Sigmoid colon (tissue), 7 donors: ENCODE measurements at regions of chr19 and their contacts with region 1.

Region 1: DNA sequence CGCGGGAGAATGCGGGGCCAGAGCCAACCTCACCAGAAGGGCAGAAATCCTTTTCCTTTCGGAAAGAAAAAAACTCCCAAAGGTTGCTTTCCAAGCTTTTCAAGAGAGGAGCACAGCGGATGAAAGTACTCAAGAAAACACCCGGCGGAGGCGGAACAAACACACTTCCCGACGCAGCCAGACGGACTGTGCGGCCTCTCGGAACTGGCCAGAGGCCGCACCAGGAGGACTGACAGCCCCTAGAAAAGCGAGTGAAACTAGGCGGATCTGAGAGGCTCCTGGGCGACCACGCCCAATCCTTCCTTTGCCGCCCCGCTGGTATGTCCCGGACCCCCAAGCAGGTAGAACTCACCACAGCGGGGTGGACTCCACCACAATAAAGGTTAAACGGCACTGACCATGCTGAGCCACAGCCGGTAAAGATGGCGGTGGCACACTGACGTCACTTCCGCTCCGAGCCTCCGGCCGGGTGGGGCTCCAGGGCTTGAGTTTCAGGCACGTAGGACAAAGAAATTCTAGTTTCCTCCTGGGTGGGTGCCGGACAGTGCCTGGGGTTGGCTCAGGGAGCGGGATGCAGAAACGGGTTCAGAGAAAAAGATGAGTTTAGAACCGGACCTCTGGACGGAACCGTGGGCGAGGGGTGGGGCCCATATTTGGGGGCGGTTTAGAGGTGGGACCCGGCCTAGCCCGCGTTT is at the start of gene ZNF562:
- DNase-seq: peak; percentile 92
- H3K4me3 ChIP-seq: peak within 1 kb of the TSS; percentile 63 to 68 (median 66)
- H3K27ac ChIP-seq: peak within 1 kb of the TSS; percentile 91 to 95 (median 93)
- H3K4me1 ChIP-seq: peaks cover 0 to 16% (median 6%) of the 10 kb centered on the region in 4 donors
- H3K27me3 ChIP-seq: no peaks in the 10 kb centered on the region
- CTCF ChIP-seq: no peak
- EP300 ChIP-seq: no peak
- POLR2A ChIP-seq: peak; percentile 36 to 56
- total RNA-seq, gene ZNF562: 21.3 to 45.4 (median 32.4) TPM

Region 2: DNA sequence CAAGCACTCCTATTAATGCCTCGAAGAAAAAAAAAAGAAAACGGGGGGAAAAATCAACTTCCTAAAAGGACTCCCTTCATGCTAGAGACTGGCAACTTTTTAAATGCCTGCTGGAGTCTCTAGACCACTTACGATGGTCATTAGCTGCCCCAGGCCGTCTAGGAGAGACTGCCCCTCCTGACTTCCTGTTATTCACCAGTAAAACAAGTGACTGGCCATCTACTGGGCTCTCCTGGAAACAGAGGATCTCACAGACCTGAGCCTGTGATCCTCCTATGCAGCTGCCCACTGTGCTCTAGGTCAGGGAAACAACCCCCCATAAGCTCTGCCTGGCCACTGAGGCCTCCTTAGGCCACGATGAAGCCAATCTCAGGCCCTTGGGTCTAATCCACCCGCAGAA is 246.9 kb before region 1 on chr19:
- intact Hi-C with region 1: no loop called
- DNase-seq: no peak
- H3K4me3 ChIP-seq: no peak overlapping the region
- H3K27ac ChIP-seq: no peak overlapping the region
- H3K4me1 ChIP-seq: no peaks in the 10 kb centered on the region
- H3K27me3 ChIP-seq: no peaks in the 10 kb centered on the region
- CTCF ChIP-seq: no peak
- EP300 ChIP-seq: no peak
- POLR2A ChIP-seq: no peak

Region 3: DNA sequence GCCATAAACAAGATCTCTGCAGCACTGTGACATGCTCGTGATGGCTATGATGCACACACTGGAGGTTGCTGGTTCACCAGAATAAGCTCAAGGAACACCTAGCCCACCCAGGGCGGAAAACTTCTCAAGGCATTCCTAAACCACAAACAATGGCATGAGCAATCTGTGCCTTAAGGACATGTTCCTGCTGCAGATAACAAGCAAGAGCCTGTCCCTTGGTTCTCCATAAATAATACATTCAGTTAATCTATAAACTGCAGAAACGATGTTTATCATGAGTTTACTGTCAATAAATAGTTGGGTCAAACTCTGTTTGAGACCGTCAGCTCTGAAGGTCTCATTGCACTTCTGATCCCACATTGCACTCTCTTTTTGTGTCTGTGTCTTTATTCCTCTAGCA is 220.9 kb before region 1 on chr19:
- intact Hi-C with region 1: no loop called
- DNase-seq: no peak
- H3K4me3 ChIP-seq: no peak overlapping the region
- H3K27ac ChIP-seq: no peak overlapping the region
- H3K4me1 ChIP-seq: no peaks in the 10 kb centered on the region
- H3K27me3 ChIP-seq: no peaks in the 10 kb centered on the region
- CTCF ChIP-seq: no peak
- EP300 ChIP-seq: no peak
- POLR2A ChIP-seq: no peak

Region 4: DNA sequence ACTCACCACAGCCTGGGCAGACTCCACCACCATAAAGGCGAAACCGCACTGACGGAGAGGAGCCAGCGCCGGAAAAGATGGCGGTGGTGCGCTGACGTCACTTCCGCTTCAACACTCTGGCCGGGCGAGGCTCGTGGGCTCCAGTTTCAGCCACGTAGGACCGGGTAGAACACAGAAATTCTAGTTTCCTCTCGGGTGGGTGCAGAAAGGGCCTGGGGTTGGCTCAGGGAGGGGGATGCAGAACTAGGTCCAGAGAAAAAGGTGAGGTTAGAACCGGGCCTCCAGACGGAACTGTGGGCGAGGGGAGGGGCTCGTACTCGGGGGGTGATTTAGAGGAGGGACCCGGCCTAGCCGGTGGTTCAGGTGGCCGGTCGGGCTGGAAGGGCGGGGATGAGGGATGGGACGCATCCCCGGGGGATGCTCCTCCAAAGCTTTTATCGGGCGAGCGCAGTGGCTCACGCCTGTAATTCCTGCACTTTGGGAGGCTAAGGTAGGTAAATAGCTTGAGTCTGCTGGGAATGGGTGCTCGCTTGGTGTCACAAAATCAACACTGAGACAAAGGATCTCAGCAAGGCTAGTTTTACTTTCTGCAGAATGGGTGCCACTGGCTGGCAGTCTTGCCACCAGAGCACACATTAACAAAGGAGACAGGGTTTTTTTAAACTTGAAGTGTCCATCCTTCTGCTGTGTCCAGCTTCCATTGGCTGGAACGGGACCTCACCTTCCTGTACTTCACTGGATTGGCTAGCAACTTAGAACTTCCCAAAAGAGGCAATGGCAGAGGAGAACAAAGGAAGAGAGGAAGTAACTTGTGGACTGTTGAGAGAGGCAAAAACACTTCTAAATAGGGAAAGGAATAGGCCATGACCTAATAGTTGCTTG is 53.4 kb before region 1 on chr19 and contains the start of gene ZNF561:
- intact Hi-C with region 1: loop called (anchors 2 kb)
- DNase-seq: peak; percentile 90
- H3K4me3 ChIP-seq: peak within 1 kb of the TSS; percentile 73 to 88 (median 76)
- H3K27ac ChIP-seq: peak within 1 kb of the TSS; percentile 87 to 91 (median 90)
- H3K4me1 ChIP-seq: peaks cover 0 to 49% (median 35%) of the 10 kb centered on the region in 4 donors
- H3K27me3 ChIP-seq: no peaks in the 10 kb centered on the region
- CTCF ChIP-seq: no peak
- EP300 ChIP-seq: no peak
- POLR2A ChIP-seq: no peak
- total RNA-seq, gene ZNF561: 30.3 to 41.3 (median 31.5) TPM

Region 5: DNA sequence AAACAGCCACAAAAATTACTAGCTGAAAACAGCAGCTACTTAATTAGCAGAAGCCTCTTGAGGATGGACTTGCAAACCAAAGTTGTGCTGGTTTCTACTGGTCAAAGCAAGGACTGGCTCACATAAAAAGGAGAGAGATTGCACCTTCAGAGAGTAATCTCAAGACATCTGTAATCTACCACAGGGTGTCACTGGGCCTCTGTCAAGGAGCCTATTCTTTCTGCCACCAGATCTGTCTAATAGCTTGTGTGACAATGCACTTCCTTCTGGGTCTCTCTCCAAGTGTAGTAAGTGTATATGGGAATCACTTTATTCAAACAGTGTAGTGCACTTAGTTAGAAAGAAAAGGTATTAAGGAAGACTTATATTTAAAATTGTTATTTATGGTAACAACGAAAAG is 29.3 kb before region 1 on chr19:
- intact Hi-C with region 1: no loop called
- DNase-seq: no peak
- H3K4me3 ChIP-seq: no peak overlapping the region
- H3K27ac ChIP-seq: no peak overlapping the region
- H3K4me1 ChIP-seq: no peaks in the 10 kb centered on the region
- H3K27me3 ChIP-seq: no peaks in the 10 kb centered on the region
- CTCF ChIP-seq: no peak
- EP300 ChIP-seq: no peak
- POLR2A ChIP-seq: no peak